Activated CD8-positive, alpha-beta T cell treated with anti-CD3 and anti-CD28 coated beads for 36 hours (primary cell): ENCODE measurements at regions of chr16 and their contacts with region 1.

Region 1: DNA sequence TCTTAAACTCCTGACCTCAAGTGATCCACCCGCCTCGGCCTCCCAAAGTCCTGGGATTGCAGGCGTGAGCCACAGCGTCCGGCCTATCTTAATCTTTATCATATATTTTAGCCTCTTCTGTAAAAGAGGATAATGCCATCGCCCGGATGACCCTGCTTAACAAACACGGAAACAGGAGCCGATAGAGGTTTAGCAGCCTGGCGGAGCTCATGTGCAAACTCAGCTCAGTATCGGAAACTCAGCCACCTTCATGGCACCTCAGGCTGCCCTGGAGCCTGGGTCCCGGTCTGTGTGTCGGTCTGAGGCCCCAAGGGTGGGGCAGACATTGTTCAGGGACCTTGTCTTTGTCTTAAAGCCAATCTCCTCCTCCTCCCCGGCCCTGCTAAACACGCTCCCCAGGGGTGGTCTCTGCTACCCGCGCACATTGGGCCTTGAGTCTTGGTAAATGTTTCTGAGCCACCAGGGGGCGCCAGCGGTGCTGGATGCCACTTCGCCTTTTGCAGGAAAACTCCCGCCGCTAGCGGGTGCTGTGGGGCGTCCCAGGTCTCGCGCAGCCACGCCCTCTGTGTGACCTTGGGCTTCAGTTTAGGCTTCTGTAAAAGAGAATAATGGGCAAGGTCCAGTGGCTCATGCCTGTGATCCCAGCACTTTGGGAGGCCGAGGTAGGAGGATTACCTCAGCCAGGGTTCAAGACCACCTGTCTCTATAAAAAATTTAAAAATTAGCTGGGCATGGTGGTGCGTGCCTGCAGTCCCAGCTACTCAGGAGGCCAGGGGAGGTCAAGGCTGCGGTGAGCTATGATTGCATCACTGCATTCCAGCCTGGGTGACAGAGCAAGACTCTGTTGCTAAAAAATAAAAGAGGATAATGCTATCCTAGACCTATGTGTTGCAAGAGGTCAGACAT is 2.7 kb downstream of the CETP start:
- DNase-seq: peak; percentile 100
- ATAC-seq: peak; percentile 92
- H3K4me3 Mint-ChIP-seq: no peak overlapping the region
- H3K27ac Mint-ChIP-seq: peak overlapping the region; percentile 94
- H3K4me1 Mint-ChIP-seq: peaks cover 23% of the 10 kb centered on the region
- H3K27me3 Mint-ChIP-seq: no peaks in the 10 kb centered on the region
- CTCF ChIP-seq: peak; percentile 99

Region 2: DNA sequence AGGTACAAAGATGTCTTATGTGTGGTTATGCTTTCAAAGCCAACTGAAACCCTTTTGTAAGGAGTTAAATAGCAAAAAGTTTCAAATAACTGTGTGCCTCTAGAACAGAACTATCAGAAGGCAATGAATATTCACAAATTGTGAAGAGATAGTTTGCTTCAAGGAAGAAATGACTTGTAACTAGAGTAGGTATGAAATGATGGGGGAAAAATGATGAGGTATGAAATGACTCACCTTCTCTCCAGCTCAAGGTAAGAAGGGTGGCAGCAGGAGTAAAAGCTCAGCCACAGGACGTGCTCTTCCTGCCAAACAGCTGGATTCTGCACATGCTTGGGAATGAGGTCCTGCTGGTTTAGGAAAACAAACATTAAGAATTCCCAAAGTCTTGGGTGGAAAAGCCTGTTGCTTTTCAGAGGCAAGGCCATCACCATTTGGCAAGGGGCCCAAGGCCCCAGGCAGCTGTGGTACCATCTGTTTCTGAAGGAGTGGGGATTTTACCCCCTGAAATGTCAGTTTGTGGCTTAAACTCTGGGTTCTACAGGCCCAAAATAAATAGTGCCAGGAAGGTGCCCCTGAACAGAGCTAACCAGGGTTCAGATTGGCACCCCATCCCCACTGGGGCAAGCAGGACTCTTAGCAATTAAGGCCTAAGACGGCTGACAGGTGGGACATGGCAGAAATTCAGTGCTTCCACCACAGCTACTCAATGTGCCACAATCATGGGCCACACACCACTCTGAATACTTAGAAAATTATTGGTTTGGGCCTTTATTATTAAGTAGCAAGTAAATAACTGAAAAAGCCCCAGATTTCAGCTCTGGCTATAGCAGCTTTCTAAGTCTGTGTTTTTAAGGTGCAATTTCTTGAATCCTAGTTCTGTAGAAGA is 19.3 kb before region 1 on chr16:
- CTCF ChIA-PET with region 1: interaction called, 93 read pairs
- POLR2A ChIA-PET with region 1: interaction called, 5 read pairs
- intact Hi-C with region 1: no loop called
- DNase-seq: peak; percentile 66
- ATAC-seq: peak; percentile 78
- H3K4me3 Mint-ChIP-seq: peak overlapping the region; percentile 21
- H3K27ac Mint-ChIP-seq: peak overlapping the region; percentile 89
- H3K4me1 Mint-ChIP-seq: peaks cover 54% of the 10 kb centered on the region
- H3K27me3 Mint-ChIP-seq: no peaks in the 10 kb centered on the region
- CTCF ChIP-seq: no peak

Region 3: DNA sequence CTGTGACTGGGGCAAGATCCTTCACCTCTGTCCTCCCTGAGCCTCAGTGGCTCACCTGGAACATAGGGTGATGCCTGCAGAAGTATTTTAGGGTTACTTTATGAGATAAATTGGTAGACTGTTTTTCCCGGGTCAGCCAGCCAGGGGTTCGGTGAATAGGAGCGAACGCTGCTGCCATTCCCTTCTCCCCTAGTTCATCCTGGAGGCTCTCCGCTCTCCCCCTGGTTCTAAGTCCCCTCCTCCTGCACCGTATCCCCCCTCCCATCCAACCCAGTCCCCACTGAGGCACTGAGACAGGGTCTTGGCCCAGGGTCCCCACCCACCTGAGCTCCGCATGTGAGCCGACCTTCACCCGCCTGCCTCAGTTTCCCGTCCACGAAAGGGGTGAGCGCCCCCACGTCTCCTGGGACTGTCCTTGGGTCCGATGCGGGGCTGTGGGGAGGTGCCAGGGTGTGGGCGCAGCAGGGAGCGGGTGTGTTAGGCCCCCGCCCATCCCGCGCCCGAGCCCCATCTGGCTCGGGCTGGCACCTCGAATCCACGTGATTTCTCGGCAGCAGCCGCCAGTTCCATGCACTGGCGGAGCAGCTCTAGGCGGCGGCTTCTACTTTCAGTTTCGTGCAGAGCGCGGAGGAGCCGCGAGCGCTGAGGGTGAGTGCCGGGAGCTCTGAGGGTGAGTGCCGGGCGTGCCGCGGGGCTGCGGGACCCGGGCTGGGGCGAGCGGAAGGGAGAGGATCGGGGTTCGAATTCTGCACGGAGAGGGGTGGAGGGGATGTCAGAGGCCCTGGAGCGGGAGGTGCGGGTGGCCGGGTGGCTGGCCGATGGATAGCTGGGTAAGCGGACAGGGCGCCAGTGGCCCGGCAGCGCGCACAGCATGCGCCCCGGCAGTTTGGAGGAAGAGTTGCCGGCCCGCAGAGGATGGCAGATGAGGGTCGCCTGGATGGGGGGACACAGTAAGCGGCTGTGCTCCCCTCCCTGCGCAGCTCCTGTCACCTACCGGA is 24.8 kb after region 1 on chr16 and contains the start of gene NLRC5:
- CTCF ChIA-PET with region 1: interaction called, 87 read pairs
- POLR2A ChIA-PET with region 1: interaction called, 34 read pairs
- intact Hi-C with region 1: no loop called
- DNase-seq: peak; percentile 95
- ATAC-seq: peak; percentile 71
- H3K4me3 Mint-ChIP-seq: peak within 1 kb of the TSS; percentile 97
- H3K27ac Mint-ChIP-seq: peak within 1 kb of the TSS; percentile 99
- H3K4me1 Mint-ChIP-seq: peaks cover 58% of the 10 kb centered on the region
- H3K27me3 Mint-ChIP-seq: no peaks in the 10 kb centered on the region
- CTCF ChIP-seq: no peak
- total RNA-seq, gene NLRC5: 135 to 153 TPM

Region 4: GRCh38 chr16:57023541-57024249 is 59.2 kb after region 1 on chr16:
- CTCF ChIA-PET with region 1: interaction called, 32 read pairs
- POLR2A ChIA-PET with region 1: interaction called, 5 read pairs
- intact Hi-C with region 1: no loop called
- DNase-seq: peak; percentile 93
- ATAC-seq: peak; percentile 89
- H3K4me3 Mint-ChIP-seq: peak overlapping the region; percentile 41
- H3K27ac Mint-ChIP-seq: peak overlapping the region; percentile 80
- H3K4me1 Mint-ChIP-seq: peaks cover 89% of the 10 kb centered on the region
- H3K27me3 Mint-ChIP-seq: no peaks in the 10 kb centered on the region
- CTCF ChIP-seq: no peak

Region 5: DNA sequence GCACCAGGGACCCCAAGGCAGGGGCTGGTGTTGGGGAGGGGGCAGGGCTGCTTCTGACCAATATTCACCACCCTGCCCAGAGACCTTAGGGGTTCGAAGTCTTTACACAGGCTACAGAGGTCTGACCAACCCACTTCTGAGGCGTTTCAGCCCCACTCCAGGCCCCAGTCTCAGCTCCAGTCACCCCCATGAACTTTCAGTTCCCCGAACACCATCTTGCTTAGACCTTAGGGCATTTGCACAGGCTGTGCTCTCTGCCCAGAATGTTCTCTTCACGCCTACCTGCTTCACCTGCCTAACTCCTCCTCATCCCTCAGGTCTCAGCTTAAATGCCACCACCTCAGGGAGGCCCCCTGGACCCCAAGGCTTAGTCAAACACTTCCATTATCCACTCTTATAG is 102.1 kb after region 1 on chr16:
- CTCF ChIA-PET with region 1: interaction called, 14 read pairs
- POLR2A ChIA-PET with region 1: interaction called, 5 read pairs
- intact Hi-C with region 1: no loop called
- DNase-seq: no peak
- ATAC-seq: no peak
- H3K4me3 Mint-ChIP-seq: no peak overlapping the region
- H3K27ac Mint-ChIP-seq: peak overlapping the region; percentile 23
- H3K4me1 Mint-ChIP-seq: peaks cover 29% of the 10 kb centered on the region
- H3K27me3 Mint-ChIP-seq: no peaks in the 10 kb centered on the region
- CTCF ChIP-seq: no peak

Region 6: GRCh38 chr16:57185944-57186871 is 221.7 kb after region 1 on chr16 and contains the starts of genes PSME3IP1 and RSPRY1:
- CTCF ChIA-PET with region 1: interaction called, 4 read pairs
- POLR2A ChIA-PET with region 1: no interaction called
- intact Hi-C with region 1: loop called (anchors 10 kb)
- DNase-seq: peak; percentile 99
- ATAC-seq: peak; percentile 93
- H3K4me3 Mint-ChIP-seq: peak within 1 kb of the TSS; percentile 95
- H3K27ac Mint-ChIP-seq: peak within 1 kb of the TSS; percentile 96
- H3K4me1 Mint-ChIP-seq: peaks cover 48% of the 10 kb centered on the region
- H3K27me3 Mint-ChIP-seq: no peaks in the 10 kb centered on the region
- CTCF ChIP-seq: no peak
- total RNA-seq, gene PSME3IP1: 101 to 103 TPM
- total RNA-seq, gene RSPRY1: 24.5 to 29.4 TPM